ENCODE measurements at regions of chr10 and their contacts with region 1.

Region 1: DNA sequence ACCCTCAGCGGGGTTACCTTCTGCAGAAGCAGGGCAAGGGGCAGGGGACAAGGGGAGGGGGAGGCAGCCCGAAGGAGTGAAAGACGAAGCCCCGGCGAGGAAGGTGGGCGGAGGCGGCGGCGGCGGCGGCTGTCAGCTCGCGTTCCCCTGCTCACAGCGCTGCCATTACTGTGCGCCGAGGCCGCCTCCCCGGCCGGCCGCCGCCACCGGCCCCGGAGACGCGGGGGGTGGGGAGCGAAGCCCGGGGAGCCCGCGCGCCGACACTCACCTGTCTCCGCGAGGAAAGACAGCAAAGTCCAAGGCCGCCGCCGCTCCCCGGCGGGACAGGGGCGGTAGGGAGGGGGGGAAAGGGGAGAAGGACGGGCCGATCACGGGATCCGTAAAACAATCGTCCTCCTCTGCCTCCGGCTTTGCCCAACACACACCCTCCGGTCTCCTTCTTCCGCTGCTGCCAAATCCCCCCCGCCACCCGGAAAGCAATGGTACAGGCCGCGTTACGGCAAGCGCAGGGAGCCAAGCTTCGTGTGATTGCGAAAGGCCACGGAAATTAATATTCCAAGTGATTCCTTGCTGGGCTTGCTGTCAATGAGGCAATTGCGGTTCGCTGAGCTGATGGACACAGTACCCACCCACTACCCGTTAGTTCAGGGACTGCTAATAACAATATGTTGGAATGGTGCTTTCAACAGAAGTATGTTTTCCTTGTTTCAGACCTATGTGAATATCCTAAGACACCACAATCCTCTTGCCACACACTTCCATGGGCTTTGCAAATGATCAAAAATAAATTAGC is at the start of gene CUL2:
- DNase-seq: peak; percentile 92 to 95
- ATAC-seq: peak; percentile 97 to 99 (median 98)
- H3K4me3 ChIP-seq: peak within 1 kb of the TSS; percentile 62 to 99 (median 91)
- H3K27ac ChIP-seq: peak within 1 kb of the TSS; percentile 87 to 99 (median 94)
- H3K4me1 ChIP-seq: peaks cover 8 to 48% (median 39%) of the 10 kb centered on the region in 9 donors
- H3K27me3 ChIP-seq: peaks cover 0 to under 1% (median 0%) of the 10 kb centered on the region in 7 donors
- CTCF ChIP-seq: no peak
- total RNA-seq, gene CUL2: 28.3 to 39.8 (median 38.0) TPM

Region 2: GRCh38 chr10:35271086-35271858 is 180.9 kb after region 1 on chr10:
- intact Hi-C with region 1: no loop called
- DNase-seq: no peak
- ATAC-seq: no peak
- H3K4me3 ChIP-seq: no peak overlapping the region
- H3K27ac ChIP-seq: no peak overlapping the region
- H3K4me1 ChIP-seq: peaks cover 0 to 5% (median 0%) of the 10 kb centered on the region in 9 donors
- H3K27me3 ChIP-seq: peaks cover 0 to 7% (median 0%) of the 10 kb centered on the region in 7 donors
- CTCF ChIP-seq: no peak

Region 3: DNA sequence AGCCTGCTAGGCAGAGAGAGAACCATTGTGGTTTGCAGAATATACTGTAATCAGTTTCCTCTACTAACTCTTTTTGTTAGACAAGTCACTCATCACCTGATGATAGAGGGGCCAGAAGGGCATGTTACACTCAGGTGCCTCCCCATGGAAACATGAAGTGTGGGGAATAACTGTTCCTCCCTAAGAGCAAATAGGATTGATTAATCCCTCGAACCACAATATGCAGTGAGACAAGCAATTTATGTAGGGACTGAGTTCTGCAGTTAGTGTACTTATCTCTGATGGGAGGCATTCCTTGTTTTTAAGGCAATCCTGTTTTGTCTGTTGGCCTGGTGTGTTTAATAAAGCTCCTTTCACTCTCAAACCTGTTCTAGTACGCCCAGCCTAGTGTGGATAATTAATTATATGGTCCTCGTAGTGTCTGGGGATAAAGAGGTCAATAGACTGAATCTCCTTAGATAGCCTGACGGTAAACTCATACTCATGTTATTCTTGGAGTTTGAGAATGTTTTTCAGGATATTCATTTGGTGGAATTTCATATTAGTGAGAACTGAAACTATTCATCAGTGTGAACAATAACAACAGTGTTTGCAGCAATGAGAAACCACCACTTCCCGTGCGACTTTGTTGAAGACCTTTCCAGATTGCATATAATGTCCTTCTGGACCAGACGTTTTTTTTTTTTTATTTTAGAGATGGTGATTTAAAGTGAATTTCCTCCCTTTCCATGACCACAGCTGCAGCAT is 896.6 kb after region 1 on chr10:
- intact Hi-C with region 1: loop called in 1 of 10 experiments (anchors 5 kb)
- DNase-seq: peak in 1 of 2 donors; percentile 17
- ATAC-seq: peak in 7 of 8 donors; percentile 15 to 88 (median 70)
- H3K4me3 ChIP-seq: peak overlapping the region in 2 of 10 donors; percentile 2 to 18
- H3K27ac ChIP-seq: peak overlapping the region in 4 of 10 donors; percentile 11 to 56 (median 21)
- H3K4me1 ChIP-seq: peaks cover 0 to 21% (median 5%) of the 10 kb centered on the region in 9 donors
- H3K27me3 ChIP-seq: no peaks in the 10 kb centered on the region
- CTCF ChIP-seq: no peak